ENCODE measurements at regions of chr4 and their contacts with region 1.

Region 1: DNA sequence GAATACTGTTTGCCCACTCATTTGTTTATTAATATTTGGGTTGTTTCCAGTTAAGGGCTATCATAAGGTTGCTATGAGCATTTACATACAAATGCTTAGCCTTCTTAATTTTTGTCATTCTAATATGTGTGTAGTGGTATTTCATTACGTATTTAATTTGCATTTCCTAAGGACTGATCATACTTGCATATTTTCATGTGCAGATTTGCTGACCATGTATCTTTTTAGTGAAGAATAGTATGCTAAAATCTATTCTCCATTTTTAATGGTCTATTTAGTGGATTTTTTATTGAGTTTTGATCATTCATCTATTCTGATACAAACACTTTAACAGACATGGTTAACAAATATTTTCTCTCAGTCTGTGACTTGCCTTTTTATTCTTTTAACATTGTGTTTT is 949.5 kb downstream of the RAB28 start:
- DNase-seq: no peak
- H3K4me3 ChIP-seq: no peak overlapping the region
- H3K27ac ChIP-seq: no peak overlapping the region
- H3K4me1 ChIP-seq: no peaks in the 10 kb centered on the region
- H3K27me3 ChIP-seq: no peaks in the 10 kb centered on the region
- CTCF ChIP-seq: no peak
- EP300 ChIP-seq: no peak
- POLR2A ChIP-seq: no peak

Region 2: DNA sequence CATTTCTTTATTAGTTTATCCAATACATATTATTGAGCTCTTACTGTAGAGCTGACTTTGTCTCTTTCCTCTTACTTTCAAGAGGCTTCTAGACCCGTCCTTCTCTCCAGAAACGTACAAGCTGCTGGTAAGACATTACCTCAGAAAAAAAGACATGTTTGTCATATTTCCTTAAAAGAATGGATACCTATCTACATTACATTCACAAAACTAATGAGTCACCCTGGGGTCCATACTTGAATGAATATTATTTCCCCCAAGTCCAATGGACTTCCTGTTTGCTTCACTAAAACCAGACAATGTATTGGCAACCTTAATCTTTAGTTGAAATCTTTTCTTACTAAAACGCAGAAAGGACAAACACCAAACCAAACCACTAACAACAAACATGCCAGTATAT is 1673.6 kb before region 1 on chr4:
- in situ Hi-C with region 1: no loop called
- intact Hi-C with region 1: loop called (anchors 5 kb)
- DNase-seq: no peak
- H3K4me3 ChIP-seq: no peak overlapping the region
- H3K27ac ChIP-seq: no peak overlapping the region
- H3K4me1 ChIP-seq: no peaks in the 10 kb centered on the region
- H3K27me3 ChIP-seq: no peaks in the 10 kb centered on the region
- CTCF ChIP-seq: no peak
- EP300 ChIP-seq: no peak
- POLR2A ChIP-seq: no peak

Region 3: GRCh38 chr4:12519426-12519825 is 15.3 kb before region 1 on chr4:
- in situ Hi-C with region 1: no loop called
- intact Hi-C with region 1: loop called (anchors 1 kb)
- DNase-seq: no peak
- H3K4me3 ChIP-seq: no peak overlapping the region
- H3K27ac ChIP-seq: no peak overlapping the region
- H3K4me1 ChIP-seq: no peaks in the 10 kb centered on the region
- H3K27me3 ChIP-seq: no peaks in the 10 kb centered on the region
- CTCF ChIP-seq: no peak
- EP300 ChIP-seq: no peak
- POLR2A ChIP-seq: no peak

Measured in transverse colon (tissue), 4 donors.